ENCODE measurements at regions of chr16 and their contacts with region 1.

Region 1: GRCh38 chr16:69100071-69100691 is 5.3 kb upstream of the HAS3 start:
- DNase-seq: no peak
- ATAC-seq: no peak
- H3K4me3 ChIP-seq: no peak overlapping the region
- H3K27ac ChIP-seq: no peak overlapping the region
- H3K4me1 ChIP-seq: no peaks in the 10 kb centered on the region
- H3K27me3 ChIP-seq: peaks cover 7 to 30% of the 10 kb centered on the region in 2 experiments; a peak in 3 of 5 replicates
- CTCF ChIP-seq: no peak
- EP300 ChIP-seq: no peak
- POLR2A ChIP-seq: no peak
- RAD21 ChIP-seq: no peak

Region 2: GRCh38 chr16:69089091-69089910 is 10.9 kb before region 1 on chr16:
- CTCF ChIA-PET with region 1: no interaction called
- POLR2A ChIA-PET with region 1: interaction called, 11 read pairs
- in situ Hi-C with region 1: no loop called
- intact Hi-C with region 1: no loop called
- DNase-seq: peak; percentile 43 to 68 (median 61)
- ATAC-seq: peak; percentile 69
- H3K4me3 ChIP-seq: no peak overlapping the region
- H3K27ac ChIP-seq: no peak overlapping the region
- H3K4me1 ChIP-seq: peaks cover 11 to 13% of the 10 kb centered on the region in 2 experiments
- H3K27me3 ChIP-seq: peaks cover 19 to 32% of the 10 kb centered on the region in 2 experiments
- CTCF ChIP-seq: no peak
- EP300 ChIP-seq: peak; percentile 69
- POLR2A ChIP-seq: no peak
- RAD21 ChIP-seq: no peak

Region 3: GRCh38 chr16:69386596-69386995 is 286.4 kb after region 1 on chr16:
- CTCF ChIA-PET with region 1: no interaction called
- POLR2A ChIA-PET with region 1: no interaction called
- in situ Hi-C with region 1: no loop called
- intact Hi-C with region 1: no loop called
- DNase-seq: peak in 1 of 4 experiments; percentile 15
- ATAC-seq: no peak
- H3K4me3 ChIP-seq: peak overlapping the region; percentile 59
- H3K27ac ChIP-seq: peak overlapping the region; percentile 17; the same call in 2 of the 3 replicates
- H3K4me1 ChIP-seq: peaks cover 4 to 31% of the 10 kb centered on the region in 2 experiments; a peak in 4 of 5 replicates
- H3K27me3 ChIP-seq: no peaks in the 10 kb centered on the region
- CTCF ChIP-seq: no peak
- EP300 ChIP-seq: no peak
- POLR2A ChIP-seq: no peak
- RAD21 ChIP-seq: no peak

Measured in K562 (cell line).